ENCODE measurements at regions of chr20 and their contacts with region 1.

Region 1: DNA sequence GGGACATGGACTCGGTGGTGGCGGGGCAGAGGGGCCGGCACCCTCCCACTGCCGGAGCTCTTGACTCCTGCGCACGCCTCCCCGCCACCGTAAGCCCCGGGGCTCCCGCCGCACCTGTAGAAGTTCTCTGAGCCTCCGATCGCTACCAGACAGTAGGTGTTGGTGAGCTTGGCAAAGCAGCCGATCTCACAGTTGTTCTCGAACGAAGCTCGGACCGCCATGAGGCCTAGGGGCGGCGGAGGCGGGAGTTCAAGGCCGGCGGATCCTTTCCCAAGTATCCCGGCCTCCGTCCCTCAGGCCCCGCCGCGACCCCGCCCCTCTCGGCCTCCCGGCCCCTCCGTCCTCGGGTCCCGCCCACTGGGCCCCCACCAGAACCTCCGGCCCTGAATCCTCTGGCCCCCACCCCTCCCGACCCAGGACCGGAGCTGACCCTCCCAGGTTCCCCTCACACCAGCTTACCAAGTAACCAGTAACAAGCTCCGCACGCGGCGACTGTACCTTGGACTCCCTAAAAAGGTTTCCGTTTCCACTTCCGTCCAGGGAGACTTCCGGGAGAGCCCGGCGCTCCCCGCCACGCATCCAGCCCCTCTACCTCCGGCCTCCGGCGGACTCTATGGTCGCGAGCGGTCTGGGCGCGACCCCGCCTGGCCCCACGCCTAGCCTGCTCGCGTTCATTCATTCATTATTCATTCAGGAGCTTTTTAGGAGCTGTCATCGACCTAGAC is at the start of gene EIF6:
- DNase-seq: peak; percentile 73 to 89
- H3K4me3 ChIP-seq: peak within 1 kb of the TSS; percentile 88
- H3K27ac ChIP-seq: peak within 1 kb of the TSS; percentile 82
- H3K4me1 ChIP-seq: peaks cover 15% of the 10 kb centered on the region
- H3K27me3 ChIP-seq: no peaks in the 10 kb centered on the region
- CTCF ChIP-seq: no peak
- total RNA-seq, gene EIF6: 255 and 270 TPM in 2 replicates

Region 2: DNA sequence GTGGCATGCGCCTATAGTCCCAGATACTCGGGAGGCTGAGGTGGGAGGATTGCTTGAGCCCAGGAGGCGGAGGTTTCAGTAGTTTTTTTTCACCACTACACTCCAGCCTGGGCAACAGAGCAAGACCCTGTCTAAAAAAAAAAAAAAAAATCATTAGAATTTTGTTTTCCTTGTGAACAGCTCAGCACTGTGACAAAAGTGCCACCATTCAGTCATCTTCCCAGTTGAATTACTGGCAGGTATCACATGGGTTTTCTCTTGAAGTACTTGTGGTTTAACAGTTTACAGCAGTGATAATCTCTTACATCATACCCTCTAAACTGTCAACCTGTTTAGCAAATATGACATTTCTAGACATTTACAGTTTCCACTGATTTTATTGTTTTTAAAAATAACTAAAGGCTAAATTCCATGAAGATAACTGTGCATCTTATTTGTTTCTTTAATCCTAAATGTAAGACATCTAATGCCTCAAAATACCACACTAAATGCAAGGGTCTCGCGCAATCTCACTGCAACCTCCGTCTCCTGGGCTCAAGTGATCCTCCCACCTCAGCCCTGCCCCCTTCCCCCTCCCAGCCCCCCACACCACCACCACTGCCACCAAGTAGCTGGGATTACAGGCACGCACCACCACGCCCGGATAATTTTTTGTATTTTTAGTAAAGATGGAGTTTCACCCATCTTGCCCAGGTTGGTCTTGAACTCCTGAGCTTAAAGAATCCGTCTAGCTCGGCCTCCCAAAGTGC is 198.8 kb before region 1 on chr20:
- CTCF ChIA-PET with region 1: no interaction called
- POLR2A ChIA-PET with region 1: interaction called, 16 read pairs
- intact Hi-C with region 1: no loop called
- DNase-seq: no peak
- H3K4me3 ChIP-seq: no peak overlapping the region
- H3K27ac ChIP-seq: no peak overlapping the region
- H3K4me1 ChIP-seq: peaks cover 8% of the 10 kb centered on the region
- H3K27me3 ChIP-seq: no peaks in the 10 kb centered on the region
- CTCF ChIP-seq: no peak

Region 3: GRCh38 chr20:35329435-35330139 is 45.2 kb after region 1 on chr20:
- CTCF ChIA-PET with region 1: no interaction called
- POLR2A ChIA-PET with region 1: no interaction called
- intact Hi-C with region 1: no loop called
- DNase-seq: peak in 1 of 2 experiments; percentile 53
- H3K4me3 ChIP-seq: no peak overlapping the region
- H3K27ac ChIP-seq: no peak overlapping the region
- H3K4me1 ChIP-seq: peaks cover 36% of the 10 kb centered on the region
- H3K27me3 ChIP-seq: no peaks in the 10 kb centered on the region
- CTCF ChIP-seq: peak; percentile 58

Region 4: DNA sequence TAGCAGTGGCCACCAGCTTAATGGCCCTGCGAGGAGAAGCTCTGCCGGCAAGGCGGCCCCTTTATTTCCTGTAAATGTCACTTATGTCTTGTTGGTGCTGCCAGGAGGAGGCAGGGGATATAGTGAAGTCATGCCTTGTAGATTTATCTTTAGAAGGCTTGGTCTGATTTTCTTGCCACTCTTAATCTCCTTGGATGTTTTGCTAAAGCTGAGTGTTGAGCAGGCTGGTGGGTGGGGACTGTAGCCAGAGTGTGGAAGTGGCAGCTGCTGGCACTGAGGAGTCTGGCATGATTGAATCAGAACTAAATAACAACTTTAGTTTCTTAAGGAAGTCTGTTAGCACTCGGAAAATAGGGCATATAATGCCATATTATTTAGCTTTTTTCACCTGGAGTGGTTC is 565.3 kb after region 1 on chr20:
- CTCF ChIA-PET with region 1: no interaction called
- POLR2A ChIA-PET with region 1: no interaction called
- intact Hi-C with region 1: no loop called
- DNase-seq: no peak
- H3K4me3 ChIP-seq: no peak overlapping the region
- H3K27ac ChIP-seq: no peak overlapping the region
- H3K4me1 ChIP-seq: no peaks in the 10 kb centered on the region
- H3K27me3 ChIP-seq: no peaks in the 10 kb centered on the region
- CTCF ChIP-seq: no peak